Heart right ventricle (tissue), 16 donors: ENCODE measurements at regions of chr11 and their contacts with region 1.

Region 1: GRCh38 chr11:31408201-31408600 is 38.5 kb downstream of the DNAJC24 start:
- DNase-seq: no peak
- ATAC-seq: no peak
- H3K4me3 ChIP-seq: no peak overlapping the region
- H3K27ac ChIP-seq: no peak overlapping the region
- H3K4me1 ChIP-seq: peaks cover 0 to 13% (median 0%) of the 10 kb centered on the region in 9 donors
- H3K27me3 ChIP-seq: no peaks in the 10 kb centered on the region
- CTCF ChIP-seq: no peak

Region 2: GRCh38 chr11:31464436-31464835 is 56.2 kb after region 1 on chr11:
- intact Hi-C with region 1: loop called in 1 of 10 experiments (anchors 10 kb)
- DNase-seq: no peak
- ATAC-seq: no peak
- H3K4me3 ChIP-seq: no peak overlapping the region
- H3K27ac ChIP-seq: no peak overlapping the region
- H3K4me1 ChIP-seq: no peaks in the 10 kb centered on the region
- H3K27me3 ChIP-seq: no peaks in the 10 kb centered on the region
- CTCF ChIP-seq: no peak